Mammary epithelial cell (primary cell): ENCODE measurements at regions of chr10 and their contacts with region 1.

Region 1: GRCh38 chr10:68901104-68901927 is at the start of gene DDX50:
- DNase-seq: peak; percentile 99
- H3K4me3 ChIP-seq: peak within 1 kb of the TSS; percentile 68 to 94 (median 77)
- H3K27ac ChIP-seq: peak within 1 kb of the TSS; percentile 93
- H3K4me1 ChIP-seq: peaks cover 17% of the 10 kb centered on the region
- H3K27me3 ChIP-seq: no peaks in the 10 kb centered on the region
- CTCF ChIP-seq: no peak
- total RNA-seq, gene DDX50: 30.0 to 39.8 TPM

Region 2: DNA sequence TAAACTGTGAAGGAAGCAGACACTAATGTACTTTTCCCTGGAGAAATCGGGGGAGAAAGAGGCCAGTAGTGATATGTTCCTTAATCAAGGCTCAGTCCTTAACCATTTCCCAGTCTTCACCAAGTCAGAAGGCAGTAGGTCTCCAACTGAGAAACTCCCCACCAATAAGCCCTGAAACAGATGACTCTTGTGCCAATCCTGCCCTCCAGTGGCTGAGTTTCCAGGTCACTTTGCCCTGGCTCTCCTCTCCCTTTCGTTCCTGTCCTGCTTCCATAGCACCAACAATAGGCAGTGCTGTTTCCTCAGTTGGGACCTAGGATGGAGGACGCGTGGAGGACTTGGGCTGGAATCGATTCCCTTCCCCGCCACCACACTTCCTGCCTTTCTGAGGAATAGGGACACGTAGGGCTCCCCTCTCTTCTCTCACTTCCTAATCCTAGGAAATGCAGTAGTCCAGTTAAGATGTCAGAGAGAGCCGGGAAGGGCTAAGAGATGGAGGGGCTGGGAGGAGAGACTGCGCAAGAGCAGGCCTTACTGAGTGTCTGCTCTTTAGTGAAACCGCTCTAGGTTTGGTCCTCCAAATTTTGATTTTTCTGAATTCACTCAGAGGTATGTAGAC is 692.8 kb before region 1 on chr10:
- CTCF ChIA-PET with region 1: no interaction called
- dilution Hi-C with region 1: no loop called
- in situ Hi-C with region 1: no loop called
- intact Hi-C with region 1: loop called (anchors 5 kb)
- DNase-seq: peak; percentile 59
- H3K4me3 ChIP-seq: no peak overlapping the region
- H3K27ac ChIP-seq: no peak overlapping the region
- H3K4me1 ChIP-seq: no peaks in the 10 kb centered on the region
- H3K27me3 ChIP-seq: no peaks in the 10 kb centered on the region
- CTCF ChIP-seq: peak; percentile 77 to 82

Region 3: DNA sequence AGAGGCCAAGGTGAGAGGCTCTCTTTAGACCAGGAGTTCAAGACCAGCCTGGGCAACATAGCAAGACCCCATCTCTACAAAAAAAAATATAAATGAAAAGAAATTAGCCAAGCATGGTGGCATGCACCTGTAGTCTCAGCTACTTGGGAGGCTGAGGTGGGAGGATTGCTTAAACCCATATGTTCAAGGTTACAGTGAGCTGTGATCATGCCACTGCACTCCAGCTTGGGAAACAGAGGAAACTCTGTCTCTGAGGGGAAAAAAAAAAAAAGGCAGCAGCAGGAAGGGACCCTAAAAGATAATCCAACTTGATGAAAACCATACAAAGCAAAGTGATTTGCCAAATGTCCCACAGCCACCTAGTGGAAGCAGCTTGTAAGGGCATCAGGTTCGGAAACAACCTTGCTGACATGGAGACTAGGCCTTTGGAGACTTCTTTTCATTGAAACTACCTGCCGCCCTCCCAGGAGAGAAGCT is 553.0 kb before region 1 on chr10:
- CTCF ChIA-PET with region 1: no interaction called
- dilution Hi-C with region 1: no loop called
- in situ Hi-C with region 1: no loop called
- intact Hi-C with region 1: loop called (anchors 5 kb)
- DNase-seq: peak; percentile 27
- H3K4me3 ChIP-seq: no peak overlapping the region
- H3K27ac ChIP-seq: no peak overlapping the region
- H3K4me1 ChIP-seq: no peaks in the 10 kb centered on the region
- H3K27me3 ChIP-seq: no peaks in the 10 kb centered on the region
- CTCF ChIP-seq: peak; percentile 70 to 76

Region 4: DNA sequence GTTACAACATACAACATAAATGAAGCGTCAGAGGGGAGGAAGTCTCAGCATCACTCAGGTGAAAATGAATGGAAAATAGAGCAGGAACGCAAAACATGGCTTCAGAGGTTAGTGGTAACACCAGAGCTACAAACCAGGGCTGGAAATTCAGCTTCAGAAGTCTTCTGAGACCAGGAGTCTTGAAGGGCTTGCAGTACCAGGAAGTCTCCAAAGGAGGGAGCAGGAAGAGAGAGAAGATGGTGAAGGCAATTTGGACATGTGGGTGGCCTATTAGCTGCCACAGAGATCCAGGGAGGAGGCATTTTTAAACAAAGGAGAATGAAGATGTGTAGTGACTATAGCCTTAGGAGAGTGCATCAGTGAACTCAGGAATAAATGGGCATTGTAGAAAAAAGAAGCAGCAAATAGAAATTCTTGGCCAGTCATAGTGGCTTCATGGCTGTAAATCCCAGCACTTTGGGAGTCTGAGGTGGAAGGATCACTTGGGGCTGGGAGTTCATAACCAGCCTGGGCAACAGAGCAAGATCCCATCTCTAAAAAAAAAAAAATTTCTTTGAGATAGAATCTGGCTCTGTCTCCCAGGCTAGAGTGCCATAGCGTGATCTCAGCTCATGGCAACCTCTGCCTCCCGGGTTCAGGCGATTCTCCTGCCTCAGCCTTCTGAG is 350.4 kb before region 1 on chr10:
- CTCF ChIA-PET with region 1: no interaction called
- dilution Hi-C with region 1: no loop called
- in situ Hi-C with region 1: no loop called
- intact Hi-C with region 1: loop called (anchors 2 kb)
- DNase-seq: peak; percentile 63
- H3K4me3 ChIP-seq: no peak overlapping the region
- H3K27ac ChIP-seq: no peak overlapping the region
- H3K4me1 ChIP-seq: peaks cover 9% of the 10 kb centered on the region
- H3K27me3 ChIP-seq: no peaks in the 10 kb centered on the region
- CTCF ChIP-seq: peak; percentile 77 to 86